ENCODE measurements at regions of chr2 and their contacts with region 1.

Region 1: DNA sequence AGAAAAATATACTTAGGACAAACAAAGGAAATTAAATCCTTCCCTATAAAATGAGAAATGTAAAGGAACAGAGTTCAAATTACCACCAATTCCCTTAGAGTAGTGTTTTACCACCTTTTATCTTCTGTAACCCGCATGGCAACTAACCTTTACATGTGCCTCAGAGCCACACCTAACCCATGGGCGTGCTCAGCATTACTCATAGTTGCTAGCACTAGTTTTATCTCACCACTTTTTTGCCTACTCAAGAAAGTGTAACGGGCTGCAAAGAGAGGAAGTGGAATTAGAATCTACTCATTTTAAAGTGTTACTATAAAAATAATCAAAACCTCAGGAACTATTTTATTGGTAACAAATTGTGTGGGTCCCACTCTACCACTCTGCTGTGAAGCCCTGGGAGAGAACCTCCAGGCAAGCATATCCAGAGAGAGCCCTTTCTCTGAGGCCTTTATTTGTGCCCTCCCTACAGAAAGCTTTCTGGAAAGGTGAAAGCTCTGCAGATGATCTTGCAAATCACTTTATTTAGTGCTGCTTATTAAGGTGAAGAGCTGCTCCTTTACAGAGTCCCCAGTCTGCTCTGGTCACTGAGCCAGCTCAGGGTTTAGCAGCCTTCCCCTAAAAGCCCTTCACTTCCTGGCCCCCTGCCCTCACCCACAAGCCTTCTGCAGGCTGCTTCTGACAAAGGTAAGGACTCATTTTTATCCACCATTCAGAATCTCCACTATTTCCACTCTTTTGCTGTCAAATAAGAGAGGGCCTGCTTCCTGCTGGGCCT is 98.8 kb downstream of the TRABD2A start:
- DNase-seq: peak; percentile 4 to 86 (median 64)
- ATAC-seq: peak; percentile 88
- H3K4me3 ChIP-seq: peak overlapping the region in 1 of 2 experiments; percentile 2
- H3K4me3 Mint-ChIP-seq: peak overlapping the region; percentile 39
- H3K27ac ChIP-seq: peak overlapping the region; percentile 42 to 80
- H3K27ac Mint-ChIP-seq: peak overlapping the region; percentile 89
- H3K4me1 ChIP-seq: peaks cover 69% of the 10 kb centered on the region
- H3K4me1 Mint-ChIP-seq: peaks cover 85% of the 10 kb centered on the region
- H3K27me3 ChIP-seq: no peaks in the 10 kb centered on the region
- H3K27me3 Mint-ChIP-seq: no peaks in the 10 kb centered on the region
- CTCF ChIP-seq: no peak

Region 2: DNA sequence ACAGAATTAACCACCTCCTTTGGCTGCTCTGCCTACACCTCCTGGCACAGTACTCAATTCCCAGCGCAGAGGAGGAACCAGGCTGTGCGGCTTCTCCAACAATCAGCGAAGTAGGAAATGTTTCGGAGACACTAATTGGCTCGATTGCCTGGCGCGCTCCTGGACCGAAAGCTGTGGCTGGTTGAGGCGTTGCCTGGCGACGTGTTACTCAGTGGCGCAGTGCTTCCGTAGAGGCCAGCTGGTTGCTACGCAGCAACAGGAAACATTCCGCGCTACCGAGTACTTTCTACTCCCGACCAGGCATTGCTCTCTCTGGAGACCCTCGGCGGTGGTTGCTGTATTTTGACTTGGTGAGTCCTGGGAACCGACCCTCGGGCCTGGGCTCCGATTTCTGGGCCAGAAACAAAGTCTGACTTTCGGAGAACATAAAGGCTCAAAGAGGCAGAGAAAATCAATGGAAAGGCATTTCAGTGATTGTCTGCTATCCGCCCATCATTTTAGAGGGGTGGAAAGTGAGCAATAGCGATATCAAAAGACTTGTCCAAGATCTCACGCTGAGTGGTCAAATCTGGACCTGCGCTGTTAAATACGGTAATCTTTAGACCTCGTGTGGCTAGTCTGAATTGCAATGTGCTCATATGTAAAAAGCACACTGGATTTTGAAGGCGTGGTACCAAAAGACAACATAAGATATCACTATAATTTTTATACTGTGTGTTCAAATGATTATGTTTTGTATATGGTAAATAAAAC is 265.7 kb before region 1 on chr2 and contains the start of gene DNAH6:
- CTCF ChIA-PET with region 1: no interaction called
- POLR2A ChIA-PET with region 1: no interaction called
- intact Hi-C with region 1: loop called in 1 of 2 experiments (anchors 5 kb)
- DNase-seq: peak; percentile 71 to 95 (median 85)
- ATAC-seq: peak; percentile 98
- H3K4me3 ChIP-seq: peak within 1 kb of the TSS; percentile 45 to 49
- H3K4me3 Mint-ChIP-seq: peak within 1 kb of the TSS; percentile 89
- H3K27ac ChIP-seq: peak within 1 kb of the TSS; percentile 56 to 74
- H3K27ac Mint-ChIP-seq: peak within 1 kb of the TSS; percentile 85
- H3K4me1 ChIP-seq: peaks cover 9% of the 10 kb centered on the region
- H3K4me1 Mint-ChIP-seq: peaks cover 18% of the 10 kb centered on the region
- H3K27me3 ChIP-seq: no peaks in the 10 kb centered on the region
- H3K27me3 Mint-ChIP-seq: no peaks in the 10 kb centered on the region
- CTCF ChIP-seq: no peak
- total RNA-seq, gene DNAH6: 0.30 to 0.61 TPM

Region 3: DNA sequence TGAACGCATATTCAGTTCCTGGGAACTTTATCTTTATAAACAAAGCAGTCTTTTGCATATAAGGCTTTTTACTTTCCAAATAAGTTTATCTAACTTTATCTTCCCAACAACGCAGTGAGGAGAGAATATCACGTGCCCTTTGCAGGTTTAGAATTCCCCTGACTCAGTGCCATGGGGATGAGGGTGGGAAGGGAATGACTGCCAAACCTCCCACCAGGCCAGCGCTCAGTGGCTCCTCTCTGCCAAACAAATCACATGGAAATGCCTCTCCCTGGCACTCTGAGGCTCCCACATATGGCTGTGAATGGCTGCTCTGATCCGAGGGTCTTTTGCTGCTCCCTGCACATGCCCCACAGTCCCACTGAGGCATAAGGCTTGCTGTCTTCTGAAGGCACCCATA is 107.5 kb before region 1 on chr2:
- CTCF ChIA-PET with region 1: no interaction called
- POLR2A ChIA-PET with region 1: no interaction called
- intact Hi-C with region 1: no loop called
- DNase-seq: no peak
- ATAC-seq: no peak
- H3K4me3 ChIP-seq: no peak overlapping the region
- H3K4me3 Mint-ChIP-seq: no peak overlapping the region
- H3K27ac ChIP-seq: no peak overlapping the region
- H3K27ac Mint-ChIP-seq: no peak overlapping the region
- H3K4me1 ChIP-seq: peaks cover 20% of the 10 kb centered on the region
- H3K4me1 Mint-ChIP-seq: peaks cover 28% of the 10 kb centered on the region
- H3K27me3 ChIP-seq: no peaks in the 10 kb centered on the region
- H3K27me3 Mint-ChIP-seq: no peaks in the 10 kb centered on the region
- CTCF ChIP-seq: no peak

Region 4: DNA sequence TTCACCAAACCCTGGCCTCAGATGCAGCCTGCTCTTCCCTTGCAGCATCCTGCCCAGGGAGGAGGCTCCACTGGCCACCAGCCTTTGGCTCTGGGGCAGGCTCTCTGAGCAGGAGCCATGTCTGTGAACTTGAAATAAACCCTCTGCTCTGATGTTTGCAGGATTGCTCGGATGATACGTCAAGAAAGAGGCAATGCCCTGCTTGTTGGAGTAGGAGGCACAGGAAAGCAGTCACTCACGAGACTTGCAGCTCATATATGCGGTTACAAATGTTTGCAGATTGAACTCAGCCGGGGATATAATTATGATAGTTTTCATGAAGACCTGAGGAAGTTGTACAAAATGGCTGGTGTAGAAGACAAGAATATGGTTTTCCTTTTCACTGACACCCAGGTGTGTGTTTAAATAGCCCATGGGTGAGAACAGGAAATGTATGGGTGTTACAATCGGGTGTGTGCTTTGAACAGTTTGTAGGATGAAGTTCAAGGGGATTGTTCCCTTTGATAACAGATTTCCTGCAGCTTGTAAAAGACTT is 88.0 kb before region 1 on chr2:
- CTCF ChIA-PET with region 1: no interaction called
- POLR2A ChIA-PET with region 1: interaction called, 3 read pairs
- intact Hi-C with region 1: loop called in 1 of 2 experiments (anchors 5 kb)
- DNase-seq: peak in 7 of 9 experiments; percentile 7 to 75 (median 45)
- ATAC-seq: peak; percentile 88
- H3K4me3 ChIP-seq: peak overlapping the region; percentile 2 to 13
- H3K4me3 Mint-ChIP-seq: peak overlapping the region; percentile 64
- H3K27ac ChIP-seq: peak overlapping the region; percentile 43 to 70
- H3K27ac Mint-ChIP-seq: peak overlapping the region; percentile 90
- H3K4me1 ChIP-seq: peaks cover 37% of the 10 kb centered on the region
- H3K4me1 Mint-ChIP-seq: peaks cover 63% of the 10 kb centered on the region
- H3K27me3 ChIP-seq: no peaks in the 10 kb centered on the region
- H3K27me3 Mint-ChIP-seq: no peaks in the 10 kb centered on the region
- CTCF ChIP-seq: no peak

Region 5: DNA sequence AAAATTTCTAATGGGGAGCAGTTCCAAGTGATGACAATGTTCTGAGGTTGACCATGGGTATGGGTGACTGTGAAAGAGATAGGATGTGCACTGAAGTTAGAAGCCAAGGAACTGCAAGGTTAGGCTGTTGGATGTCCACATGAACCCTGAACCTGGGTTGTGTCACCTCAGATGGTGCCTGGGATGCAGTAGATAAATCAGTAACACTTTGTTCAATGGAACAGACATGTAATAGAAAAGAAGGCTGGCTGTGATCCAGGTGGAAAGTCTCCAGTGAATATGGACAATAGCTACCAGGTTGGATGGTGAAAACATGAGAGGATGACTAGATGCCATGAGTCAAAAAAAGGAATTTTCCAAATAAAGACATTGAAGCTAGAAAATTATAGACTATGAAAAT is 32.7 kb before region 1 on chr2:
- CTCF ChIA-PET with region 1: no interaction called
- POLR2A ChIA-PET with region 1: no interaction called
- intact Hi-C with region 1: loop called in 1 of 2 experiments (anchors 5 kb)
- DNase-seq: no peak
- ATAC-seq: no peak
- H3K4me3 ChIP-seq: no peak overlapping the region
- H3K4me3 Mint-ChIP-seq: no peak overlapping the region
- H3K27ac ChIP-seq: no peak overlapping the region
- H3K27ac Mint-ChIP-seq: no peak overlapping the region
- H3K4me1 ChIP-seq: no peaks in the 10 kb centered on the region
- H3K4me1 Mint-ChIP-seq: peaks cover 8% of the 10 kb centered on the region
- H3K27me3 ChIP-seq: no peaks in the 10 kb centered on the region
- H3K27me3 Mint-ChIP-seq: no peaks in the 10 kb centered on the region
- CTCF ChIP-seq: no peak

Region 6: DNA sequence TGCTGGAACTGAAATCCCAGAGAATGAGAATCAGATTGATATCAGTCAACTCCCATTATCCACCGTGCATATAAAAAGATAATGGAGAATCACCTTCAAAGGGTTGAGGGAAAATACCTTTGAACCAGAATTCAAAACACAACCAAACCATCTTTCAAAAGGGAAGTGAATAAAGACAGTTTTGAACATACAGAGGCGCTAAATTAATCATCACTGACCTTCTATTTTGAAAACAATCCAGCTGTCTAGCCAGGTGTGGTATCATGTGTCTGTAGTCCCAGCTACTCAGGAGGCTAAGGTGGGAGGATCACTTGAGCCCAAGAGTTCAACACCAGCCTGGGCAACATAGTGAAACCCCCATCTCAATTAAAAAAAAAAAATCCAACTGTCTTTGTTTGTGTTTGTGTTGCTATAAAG is 35.1 kb after region 1 on chr2:
- CTCF ChIA-PET with region 1: no interaction called
- POLR2A ChIA-PET with region 1: interaction called, 3 read pairs
- intact Hi-C with region 1: loop called in 1 of 2 experiments (anchors 5 kb)
- DNase-seq: no peak
- ATAC-seq: no peak
- H3K4me3 ChIP-seq: no peak overlapping the region
- H3K4me3 Mint-ChIP-seq: no peak overlapping the region
- H3K27ac ChIP-seq: no peak overlapping the region
- H3K27ac Mint-ChIP-seq: peak overlapping the region; percentile 53
- H3K4me1 ChIP-seq: peaks cover 52% of the 10 kb centered on the region
- H3K4me1 Mint-ChIP-seq: peaks cover 75% of the 10 kb centered on the region
- H3K27me3 ChIP-seq: no peaks in the 10 kb centered on the region
- H3K27me3 Mint-ChIP-seq: no peaks in the 10 kb centered on the region
- CTCF ChIP-seq: no peak

Region 7: GRCh38 chr2:84846041-84846663 is 64.0 kb after region 1 on chr2:
- CTCF ChIA-PET with region 1: interaction called, 3 read pairs
- POLR2A ChIA-PET with region 1: interaction called, 14 read pairs
- intact Hi-C with region 1: loop called (anchors 2 to 5 kb)
- DNase-seq: peak in 7 of 9 experiments; percentile 37 to 87 (median 65)
- ATAC-seq: peak; percentile 70
- H3K4me3 ChIP-seq: peak overlapping the region in 1 of 2 experiments; percentile 7
- H3K4me3 Mint-ChIP-seq: peak overlapping the region; percentile 65
- H3K27ac ChIP-seq: peak overlapping the region; percentile 68 to 88
- H3K27ac Mint-ChIP-seq: peak overlapping the region; percentile 94
- H3K4me1 ChIP-seq: peaks cover 97% of the 10 kb centered on the region
- H3K4me1 Mint-ChIP-seq: peaks cover 94% of the 10 kb centered on the region
- H3K27me3 ChIP-seq: no peaks in the 10 kb centered on the region
- H3K27me3 Mint-ChIP-seq: no peaks in the 10 kb centered on the region
- CTCF ChIP-seq: no peak